Dorsolateral prefrontal cortex (tissue), 120 donors: ENCODE measurements at regions of chr19 and their contacts with region 1.

Region 1: DNA sequence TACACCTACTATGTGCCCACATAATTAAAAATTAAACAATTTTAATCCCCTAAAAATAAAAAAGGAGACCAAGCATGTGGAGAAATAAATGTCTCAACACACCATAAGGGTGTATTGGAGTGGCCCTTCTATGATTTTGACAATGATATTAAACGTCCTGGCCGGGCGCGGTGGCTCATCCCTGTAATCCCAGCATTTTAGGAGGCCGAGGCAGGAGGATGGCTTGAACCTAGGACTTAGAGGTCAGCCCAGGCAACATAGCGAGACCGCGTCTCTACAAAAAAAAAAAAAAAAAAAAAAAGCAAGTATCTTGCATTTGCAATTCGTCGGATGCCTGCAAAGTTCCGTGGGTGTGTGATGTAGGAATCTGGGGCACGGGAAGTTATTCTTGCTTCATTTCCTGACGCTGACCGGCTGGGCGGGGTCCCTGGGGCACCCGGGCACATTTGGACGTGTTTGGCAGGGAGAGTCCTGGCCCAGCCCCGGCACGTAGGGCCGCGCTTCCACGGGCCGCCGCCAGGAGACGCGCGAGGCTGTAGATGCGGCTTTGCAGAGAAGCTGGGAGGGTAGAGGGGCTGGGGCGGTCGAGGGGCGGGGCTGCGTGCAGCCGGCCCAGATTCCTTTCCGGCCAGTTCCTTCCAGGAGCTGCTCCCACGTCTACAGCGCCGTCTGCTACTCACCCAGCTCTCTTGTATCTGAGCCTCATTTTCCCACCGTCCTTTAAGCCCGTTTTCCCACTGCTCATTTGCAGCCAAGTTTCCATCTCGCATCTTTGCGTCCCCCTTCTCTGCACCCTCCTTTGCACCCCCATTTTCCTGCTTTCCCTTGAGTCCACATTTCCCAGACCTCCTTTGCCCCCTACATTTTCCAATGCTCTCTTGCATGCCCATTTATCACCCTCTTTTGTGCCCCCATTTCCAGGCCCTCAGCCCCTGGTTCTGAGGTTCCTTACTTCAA is 2.2 kb upstream of the TSPAN16 start:
- DNase-seq: peak; percentile 87 to 93 (median 91)
- H3K4me3 ChIP-seq: peak overlapping the region; percentile 12 to 65 (median 47)
- H3K27ac ChIP-seq: peak overlapping the region in 53 of 59 donors; percentile 15 to 86 (median 70)
- H3K27me3 ChIP-seq: no peaks in the 10 kb centered on the region
- CTCF ChIP-seq: peak; percentile 81 to 99 (median 95)

Region 2: GRCh38 chr19:11137542-11138384 is 155.9 kb before region 1 on chr19:
- intact Hi-C with region 1: loop called in 1 of 2 experiments (anchors 5 kb)
- DNase-seq: peak; percentile 61 to 88 (median 80)
- H3K4me3 ChIP-seq: peak overlapping the region; percentile 29 to 70 (median 54)
- H3K27ac ChIP-seq: peak overlapping the region; percentile 53 to 95 (median 87)
- H3K27me3 ChIP-seq: no peaks in the 10 kb centered on the region
- CTCF ChIP-seq: peak; percentile 69 to 96 (median 88)

Region 3: GRCh38 chr19:11346092-11346940 is 52.6 kb after region 1 on chr19 and contains the starts of genes CCDC159 and TMEM205:
- intact Hi-C with region 1: loop called in 1 of 2 experiments (anchors 5 kb)
- DNase-seq: peak; percentile 96 to 99 (median 99)
- H3K4me3 ChIP-seq: peak within 1 kb of the TSS; percentile 39 to 94 (median 82)
- H3K27ac ChIP-seq: peak within 1 kb of the TSS in 58 of 59 donors; percentile 13 to 93 (median 83)
- H3K27me3 ChIP-seq: no peaks in the 10 kb centered on the region
- CTCF ChIP-seq: peak in 35 of 56 donors; percentile 6 to 64 (median 31)
- total RNA-seq, gene CCDC159: 31.2 to 104 (median 61.7) TPM
- total RNA-seq, gene TMEM205: 70.3 to 122 (median 96.4) TPM

Region 4: GRCh38 chr19:11374433-11375142 is 80.9 kb after region 1 on chr19 and contains the start of gene SWSAP1:
- intact Hi-C with region 1: loop called (anchors 2 to 5 kb)
- DNase-seq: peak; percentile 92 to 99 (median 99)
- H3K4me3 ChIP-seq: peak within 1 kb of the TSS; percentile 51 to 99 (median 77)
- H3K27ac ChIP-seq: peak within 1 kb of the TSS; percentile 74 to 99 (median 94)
- H3K27me3 ChIP-seq: no peaks in the 10 kb centered on the region
- CTCF ChIP-seq: peak in 16 of 56 donors; percentile 3 to 51 (median 20)
- total RNA-seq, gene SWSAP1: 0.29 to 2.7 (median 1.1) TPM in 119 of 120 experiments, not detected in the other

Region 5: DNA sequence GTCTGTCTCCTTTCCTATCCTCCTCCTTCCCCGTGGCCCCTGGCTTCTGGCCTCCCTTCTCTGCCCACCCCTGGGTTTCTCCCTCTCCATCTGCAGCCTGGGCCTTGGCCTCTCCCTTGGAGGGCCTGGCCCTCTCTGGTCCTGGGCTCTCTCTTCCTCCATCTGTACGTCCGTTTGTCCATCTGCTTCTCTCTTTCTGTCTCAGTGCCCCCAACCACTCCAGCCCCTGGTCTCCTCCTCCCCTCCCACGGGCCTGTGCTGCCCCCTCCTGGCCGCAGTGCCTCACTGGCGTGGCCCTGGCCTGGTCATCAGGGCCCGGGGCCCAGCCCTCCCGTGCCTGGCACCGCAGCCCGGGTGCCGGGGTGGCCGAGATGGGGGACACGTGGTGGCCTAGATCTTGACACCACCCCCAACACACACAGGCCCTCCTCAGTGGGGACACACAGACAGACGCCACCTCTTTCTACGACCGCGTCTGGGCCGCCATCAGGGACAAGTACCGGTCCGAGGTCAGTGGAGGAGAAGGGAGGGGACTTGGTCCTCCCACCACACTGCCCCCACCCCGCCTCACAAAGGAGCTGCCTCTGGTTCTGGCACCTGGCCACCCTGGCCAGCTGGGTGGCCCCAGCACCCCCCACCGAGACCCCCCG is 153.1 kb after region 1 on chr19:
- intact Hi-C with region 1: loop called in 1 of 2 experiments (anchors 5 kb)
- DNase-seq: peak; percentile 71 to 92 (median 84)
- H3K4me3 ChIP-seq: peak overlapping the region in 56 of 59 donors; percentile 15 to 72 (median 50)
- H3K27ac ChIP-seq: peak overlapping the region; percentile 7 to 100 (median 95)
- H3K27me3 ChIP-seq: no peaks in the 10 kb centered on the region
- CTCF ChIP-seq: peak; percentile 51 to 94 (median 86)